IMR-90 (cell line): ENCODE measurements at regions of chr2 and their contacts with region 1.

Region 1: DNA sequence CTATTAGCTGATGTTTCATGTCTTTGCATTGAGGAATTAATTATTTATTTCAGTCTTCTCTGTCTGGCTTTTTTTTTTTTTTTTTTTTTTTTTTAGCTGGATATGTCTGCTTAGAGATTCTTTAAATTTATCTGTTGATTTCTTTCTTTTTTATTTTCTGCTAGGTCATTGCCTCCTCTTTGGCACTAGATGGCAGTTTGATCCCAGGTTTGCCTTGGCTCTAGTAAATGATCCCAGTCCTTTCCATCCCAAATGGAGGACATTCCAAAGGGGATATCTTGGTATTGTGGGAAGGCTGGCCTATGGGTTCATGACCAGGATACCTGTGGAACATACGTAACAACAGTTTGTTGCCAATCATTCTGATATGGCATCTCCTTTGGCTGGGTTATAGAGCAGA is 339.5 kb upstream of the GCFC2 start:
- DNase-seq: no peak
- ATAC-seq: no peak
- H3K4me3 ChIP-seq: no peak overlapping the region
- H3K27ac ChIP-seq: no peak overlapping the region
- H3K4me1 ChIP-seq: no peaks in the 10 kb centered on the region
- H3K27me3 ChIP-seq: no peaks in the 10 kb centered on the region
- CTCF ChIP-seq: no peak
- POLR2A ChIP-seq: no peak
- RAD21 ChIP-seq: no peak

Region 2: GRCh38 chr2:76027761-76028160 is 22.4 kb before region 1 on chr2:
- CTCF ChIA-PET with region 1: no interaction called
- POLR2A ChIA-PET with region 1: no interaction called
- dilution Hi-C with region 1: no loop called
- in situ Hi-C with region 1: no loop called
- intact Hi-C with region 1: loop called (anchors 1 kb)
- DNase-seq: no peak
- ATAC-seq: no peak
- H3K4me3 ChIP-seq: no peak overlapping the region
- H3K27ac ChIP-seq: no peak overlapping the region
- H3K4me1 ChIP-seq: no peaks in the 10 kb centered on the region
- H3K27me3 ChIP-seq: no peaks in the 10 kb centered on the region
- CTCF ChIP-seq: no peak
- POLR2A ChIP-seq: no peak
- RAD21 ChIP-seq: no peak